Panc1 (cell line): ENCODE measurements at regions of chr7 and their contacts with region 1.

Region 1: DNA sequence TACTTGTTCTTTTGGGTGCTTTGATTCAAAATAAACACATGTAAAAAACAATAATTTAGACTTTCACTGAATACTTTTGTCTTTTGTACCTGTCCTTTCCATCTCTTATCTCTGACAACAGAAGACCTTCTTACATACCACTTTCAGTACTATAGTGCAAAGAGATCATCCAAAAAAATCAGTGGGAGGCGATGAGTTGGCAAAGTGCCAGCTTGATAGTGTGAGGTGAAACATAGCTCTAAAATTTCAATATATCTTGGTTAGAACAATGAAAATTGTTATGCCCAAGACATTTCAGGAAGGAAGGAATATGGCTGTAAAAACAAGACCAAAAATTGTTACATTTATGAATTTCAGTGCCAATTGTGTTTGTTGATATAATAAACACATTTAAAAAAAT is 390.2 kb upstream of the COBL start:
- DNase-seq: no peak
- ATAC-seq: no peak
- H3K4me3 ChIP-seq: no peak overlapping the region
- H3K27ac ChIP-seq: no peak overlapping the region
- H3K4me1 ChIP-seq: no peaks in the 10 kb centered on the region
- H3K27me3 ChIP-seq: no peaks in the 10 kb centered on the region
- CTCF ChIP-seq: no peak

Region 2: GRCh38 chr7:51647931-51648351 is 58.9 kb before region 1 on chr7:
- CTCF ChIA-PET with region 1: no interaction called
- POLR2A ChIA-PET with region 1: no interaction called
- in situ Hi-C with region 1: no loop called
- intact Hi-C with region 1: no loop called
- DNase-seq: no peak
- ATAC-seq: no peak
- H3K4me3 ChIP-seq: no peak overlapping the region
- H3K27ac ChIP-seq: no peak overlapping the region
- H3K4me1 ChIP-seq: no peaks in the 10 kb centered on the region
- H3K27me3 ChIP-seq: no peaks in the 10 kb centered on the region
- CTCF ChIP-seq: no peak

Region 3: DNA sequence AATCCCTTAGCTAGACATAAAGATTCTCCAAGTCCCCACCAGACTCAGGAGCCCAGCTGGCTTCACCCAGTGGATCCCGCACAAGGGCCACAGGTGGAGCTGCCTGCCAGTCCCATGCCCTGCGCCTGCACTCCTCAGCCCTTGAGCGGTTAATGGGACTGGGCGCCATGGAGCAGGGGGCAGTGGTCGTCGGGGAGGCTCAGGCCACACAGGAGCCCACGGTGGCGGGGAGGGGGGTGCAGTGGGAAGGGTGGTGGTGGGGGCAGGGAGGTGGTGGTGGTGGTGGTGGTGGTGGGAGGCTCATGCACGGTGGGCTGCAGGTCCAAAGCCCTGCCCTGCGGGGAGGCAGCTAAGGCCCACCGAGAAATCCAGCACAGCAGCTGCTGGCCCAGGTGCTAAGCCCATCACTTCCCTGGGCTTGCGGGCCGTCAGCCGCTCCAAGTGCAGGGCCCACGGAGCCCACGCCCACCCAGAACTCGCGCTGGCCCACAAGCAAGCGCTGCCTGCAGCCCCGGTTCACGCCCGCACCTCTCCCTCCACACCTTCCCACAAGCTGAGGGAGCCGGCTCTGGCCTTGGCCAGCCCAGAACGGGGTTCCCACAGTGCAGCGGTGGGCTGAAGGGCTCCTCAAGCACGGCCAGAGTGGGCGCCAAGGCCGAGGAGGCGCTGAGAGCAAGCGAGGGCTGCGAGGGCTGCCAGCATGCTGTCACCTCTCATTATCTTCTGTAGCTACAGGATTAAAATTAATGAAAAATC is 596.1 kb after region 1 on chr7:
- CTCF ChIA-PET with region 1: interaction called, 10 read pairs
- POLR2A ChIA-PET with region 1: no interaction called
- in situ Hi-C with region 1: no loop called
- intact Hi-C with region 1: no loop called
- DNase-seq: no peak
- ATAC-seq: no peak
- H3K4me3 ChIP-seq: no peak overlapping the region
- H3K27ac ChIP-seq: no peak overlapping the region
- H3K4me1 ChIP-seq: no peaks in the 10 kb centered on the region
- H3K27me3 ChIP-seq: no peaks in the 10 kb centered on the region
- CTCF ChIP-seq: no peak